PC-9 (cell line): ENCODE measurements at regions of chr7 and their contacts with region 1.

Region 1: DNA sequence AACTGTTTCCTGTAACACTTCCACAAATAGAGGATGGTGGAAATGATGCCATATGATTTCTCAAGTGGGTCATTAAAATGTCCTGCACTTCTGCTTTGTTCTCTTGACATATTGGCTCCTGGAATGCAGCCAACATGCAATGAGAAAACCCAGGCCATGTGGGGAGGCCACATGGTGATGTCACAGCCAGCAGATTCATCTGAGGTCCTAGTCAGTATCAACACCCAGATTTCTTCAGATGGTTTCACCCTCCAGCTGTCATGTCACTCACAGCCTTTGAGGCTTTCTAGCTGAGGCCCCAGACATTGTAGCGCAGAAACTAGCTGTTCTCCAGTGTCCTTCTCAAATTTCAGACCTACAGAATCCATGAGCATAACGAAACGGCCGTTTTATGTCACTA is 102.3 kb upstream of the NUPR2 start:
- DNase-seq: no peak
- H3K4me3 ChIP-seq: no peak overlapping the region
- H3K27ac ChIP-seq: no peak overlapping the region
- H3K4me1 ChIP-seq: no peaks in the 10 kb centered on the region
- H3K27me3 ChIP-seq: peaks cover 21% of the 10 kb centered on the region
- CTCF ChIP-seq: no peak

Region 2: DNA sequence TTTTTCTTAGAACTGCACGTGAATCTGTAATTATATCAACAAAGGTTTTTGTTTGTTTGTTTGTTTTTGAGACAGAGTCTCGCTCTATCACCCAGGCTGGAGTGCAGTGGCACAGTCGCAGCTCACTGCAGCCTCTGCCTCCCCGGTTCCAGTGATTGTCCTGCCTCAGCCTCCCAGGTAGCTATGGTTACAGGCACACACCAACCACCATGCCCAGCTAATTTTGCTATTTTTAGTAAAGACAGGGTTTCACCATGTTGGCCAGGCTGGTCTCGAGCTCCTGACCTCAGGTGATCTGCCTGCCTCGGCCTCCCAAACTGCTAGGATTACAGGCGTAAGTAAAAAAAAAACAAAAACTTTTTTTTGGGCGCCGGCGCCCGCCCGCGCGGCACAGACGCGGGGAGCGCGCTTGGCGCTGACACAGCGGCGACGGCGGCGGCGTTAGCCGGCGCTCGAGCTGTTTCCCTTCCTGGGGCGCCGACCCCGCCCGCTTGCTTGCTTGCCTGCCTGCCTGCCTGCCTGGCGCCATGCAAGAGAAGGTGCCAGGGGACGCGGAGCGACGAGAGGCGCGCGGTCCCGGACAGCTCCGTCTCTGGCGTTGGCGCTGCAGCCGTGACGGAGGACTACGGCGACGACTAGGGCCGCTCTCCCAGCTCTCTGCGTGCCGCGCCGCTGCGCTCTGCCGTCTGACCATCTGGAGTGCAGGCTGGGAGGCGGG is 69.1 kb after region 1 on chr7:
- CTCF ChIA-PET with region 1: interaction called, 12 read pairs
- POLR2A ChIA-PET with region 1: no interaction called
- intact Hi-C with region 1: no loop called
- DNase-seq: no peak
- H3K4me3 ChIP-seq: no peak overlapping the region
- H3K27ac ChIP-seq: no peak overlapping the region
- H3K4me1 ChIP-seq: no peaks in the 10 kb centered on the region
- H3K27me3 ChIP-seq: peaks cover 8% of the 10 kb centered on the region; the same call in 1 of the 2 replicates
- CTCF ChIP-seq: no peak